WTC11 (cell line): ENCODE measurements at regions of chr1 and their contacts with region 1.

Region 1: DNA sequence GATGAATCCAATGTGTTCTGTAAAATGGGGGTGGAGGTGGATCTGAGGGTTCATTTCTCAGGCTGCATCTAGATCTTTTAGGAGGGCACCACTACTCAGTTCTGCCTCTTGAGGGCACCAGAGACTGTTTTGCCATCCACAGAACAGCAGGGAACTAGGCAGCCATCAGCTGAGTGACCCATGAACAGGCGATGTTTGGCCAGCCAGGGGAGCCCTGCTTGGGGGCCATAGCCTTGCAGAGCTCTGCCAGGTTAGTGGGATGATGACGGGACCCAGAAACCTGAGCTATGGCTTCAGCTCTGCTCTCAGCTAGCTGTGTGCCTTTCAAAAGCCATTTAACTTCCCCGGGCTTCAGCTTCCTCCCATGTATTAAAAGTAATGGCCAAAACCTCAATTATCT is 13.4 kb upstream of the NOS1AP start:
- DNase-seq: peak; percentile 85
- ATAC-seq: peak; percentile 99
- H3K4me3 Mint-ChIP-seq: no peak overlapping the region
- H3K27ac Mint-ChIP-seq: no peak overlapping the region
- H3K4me1 Mint-ChIP-seq: peaks cover 4% of the 10 kb centered on the region; the same call in 1 of the 2 replicates
- H3K27me3 Mint-ChIP-seq: peaks cover 7% of the 10 kb centered on the region; the same call in 1 of the 2 replicates
- CTCF ChIP-seq: peak; percentile 75

Region 2: DNA sequence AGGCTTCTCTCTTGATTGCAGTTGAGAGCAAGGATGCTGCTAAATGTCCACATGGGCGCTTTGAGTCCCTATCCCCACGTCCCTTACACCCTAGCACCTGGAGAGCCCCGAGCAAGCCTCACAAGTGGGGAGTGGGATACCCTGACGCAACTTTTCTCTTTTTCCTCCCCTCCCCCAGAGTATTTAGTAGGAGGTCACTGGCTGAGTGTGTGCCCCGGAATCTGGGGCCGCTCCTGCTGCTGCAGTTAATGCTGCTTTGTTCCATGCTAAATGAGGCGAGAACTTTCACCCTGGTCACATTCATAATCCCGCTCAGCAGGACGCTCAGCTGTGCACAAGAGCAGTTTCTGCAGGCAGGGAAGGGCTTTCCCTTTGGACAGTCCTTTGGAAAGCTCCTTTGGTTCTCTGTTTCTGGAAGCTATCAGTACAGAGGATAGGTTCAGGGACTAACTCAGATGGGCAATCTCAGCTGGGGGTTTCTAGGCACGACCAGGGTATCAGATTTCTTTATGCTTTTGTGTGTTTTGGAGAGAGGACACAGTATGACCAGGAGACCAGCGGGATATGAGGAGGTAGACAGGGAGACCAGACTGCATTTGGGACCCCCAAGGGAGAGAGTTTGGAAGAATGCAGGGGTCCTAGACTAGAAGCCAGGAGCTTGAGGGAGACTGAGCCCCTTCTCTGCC is 89.4 kb after region 1 on chr1:
- CTCF ChIA-PET with region 1: interaction called, 11 read pairs
- POLR2A ChIA-PET with region 1: no interaction called
- DNase-seq: no peak
- ATAC-seq: peak; percentile 44
- H3K4me3 Mint-ChIP-seq: no peak overlapping the region
- H3K27ac Mint-ChIP-seq: no peak overlapping the region
- H3K4me1 Mint-ChIP-seq: peaks cover 39% of the 10 kb centered on the region
- H3K27me3 Mint-ChIP-seq: peaks cover 5% of the 10 kb centered on the region
- CTCF ChIP-seq: no peak

Region 3: GRCh38 chr1:162230096-162230495 is 174.1 kb after region 1 on chr1:
- CTCF ChIA-PET with region 1: interaction called, 15 read pairs
- POLR2A ChIA-PET with region 1: no interaction called
- DNase-seq: peak; percentile 57
- ATAC-seq: peak; percentile 97
- H3K4me3 Mint-ChIP-seq: 0 out of 2 replicates have a peak overlapping the region, but pooled peaks have one; percentile 12
- H3K27ac Mint-ChIP-seq: peak overlapping the region; percentile 72
- H3K4me1 Mint-ChIP-seq: peaks cover 59% of the 10 kb centered on the region
- H3K27me3 Mint-ChIP-seq: no peaks in the 10 kb centered on the region; the same call in 1 of the 2 replicates
- CTCF ChIP-seq: no peak

Region 4: GRCh38 chr1:162357681-162358266 is 301.7 kb after region 1 on chr1:
- CTCF ChIA-PET with region 1: interaction called, 26 read pairs
- POLR2A ChIA-PET with region 1: no interaction called
- DNase-seq: no peak
- ATAC-seq: peak; percentile 79
- H3K4me3 Mint-ChIP-seq: no peak overlapping the region
- H3K27ac Mint-ChIP-seq: no peak overlapping the region
- H3K4me1 Mint-ChIP-seq: peaks cover 12% of the 10 kb centered on the region
- H3K27me3 Mint-ChIP-seq: no peaks in the 10 kb centered on the region
- CTCF ChIP-seq: peak; percentile 49; the same call in 1 of the 2 replicates